Prostate gland (tissue), 2 donors: ENCODE measurements at regions of chr18 and their contacts with region 1.

Region 1: GRCh38 chr18:10560450-10561045 is 34.7 kb downstream of the NAPG start:
- DNase-seq: peak; percentile 80
- H3K4me3 ChIP-seq: peak overlapping the region in 1 of 2 donors; percentile 7
- H3K27ac ChIP-seq: peak overlapping the region in 1 of 2 donors; percentile 35
- H3K4me1 ChIP-seq: no peaks in the 10 kb centered on the region
- H3K27me3 ChIP-seq: no peaks in the 10 kb centered on the region
- CTCF ChIP-seq: peak in 3 of 4 experiments; percentile 75 to 80 (median 80)
- POLR2A ChIP-seq: no peak

Region 2: GRCh38 chr18:10841203-10841602 is 280.7 kb after region 1 on chr18:
- intact Hi-C with region 1: loop called (anchors 5 kb)
- DNase-seq: no peak
- H3K4me3 ChIP-seq: no peak overlapping the region
- H3K27ac ChIP-seq: no peak overlapping the region
- H3K4me1 ChIP-seq: no peaks in the 10 kb centered on the region
- H3K27me3 ChIP-seq: no peaks in the 10 kb centered on the region
- CTCF ChIP-seq: no peak
- POLR2A ChIP-seq: no peak

Region 3: DNA sequence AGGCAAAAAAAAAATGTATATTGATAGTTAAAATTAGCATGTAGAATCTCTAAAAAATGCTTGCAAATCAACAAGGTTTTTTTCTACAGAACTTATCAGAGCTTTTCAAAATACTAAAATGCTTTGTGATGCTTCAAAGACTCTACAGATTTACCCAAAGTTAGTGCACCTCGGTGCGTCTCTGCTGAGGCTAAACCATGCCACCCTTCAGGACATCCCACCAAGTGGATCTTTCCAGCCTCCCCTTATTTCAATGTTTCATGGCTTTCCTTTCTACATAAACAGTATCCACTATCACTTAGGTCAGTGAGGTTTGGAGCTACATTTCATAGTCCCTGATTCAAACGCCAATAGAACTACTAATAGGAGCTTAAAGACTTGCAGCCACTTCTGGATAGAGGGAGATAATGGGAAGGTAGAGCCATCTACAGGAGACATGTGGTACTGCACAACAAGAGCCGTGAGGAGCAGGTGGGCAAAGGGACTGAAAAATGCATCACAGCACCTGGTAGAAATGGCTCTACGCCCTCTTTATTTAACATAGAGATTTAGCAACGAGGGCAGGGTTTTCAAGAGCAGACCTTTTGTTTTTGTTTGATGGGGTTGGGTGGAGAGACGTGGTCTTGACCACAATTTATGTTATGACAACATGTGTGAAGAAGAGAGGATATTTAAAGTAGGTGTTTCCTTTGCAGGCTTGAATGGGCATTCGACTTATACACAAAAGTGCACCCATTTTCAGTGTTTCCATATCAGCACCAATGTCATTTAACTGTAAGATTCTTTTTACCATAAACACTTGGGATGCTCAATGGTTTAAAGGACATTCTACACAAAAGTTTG is 992.8 kb after region 1 on chr18:
- intact Hi-C with region 1: loop called (anchors 10 kb)
- DNase-seq: peak; percentile 17
- H3K4me3 ChIP-seq: no peak overlapping the region
- H3K27ac ChIP-seq: no peak overlapping the region
- H3K4me1 ChIP-seq: no peaks in the 10 kb centered on the region
- H3K27me3 ChIP-seq: no peaks in the 10 kb centered on the region
- CTCF ChIP-seq: peak; percentile 56 to 76 (median 64)
- POLR2A ChIP-seq: no peak